CD8-positive, alpha-beta T cell (primary cell): ENCODE measurements at regions of chr2 and their contacts with region 1.

Region 1: GRCh38 chr2:106011380-106011779 is 182.7 kb downstream of the UXS1 start:
- DNase-seq: no peak
- ATAC-seq: no peak
- H3K4me3 ChIP-seq: no peak overlapping the region
- H3K4me3 Mint-ChIP-seq: no peak overlapping the region
- H3K27ac ChIP-seq: no peak overlapping the region
- H3K27ac Mint-ChIP-seq: no peak overlapping the region
- H3K4me1 ChIP-seq: no peaks in the 10 kb centered on the region
- H3K4me1 Mint-ChIP-seq: peaks cover 3% of the 10 kb centered on the region
- H3K27me3 ChIP-seq: no peaks in the 10 kb centered on the region
- H3K27me3 Mint-ChIP-seq: no peaks in the 10 kb centered on the region
- CTCF ChIP-seq: no peak

Region 2: DNA sequence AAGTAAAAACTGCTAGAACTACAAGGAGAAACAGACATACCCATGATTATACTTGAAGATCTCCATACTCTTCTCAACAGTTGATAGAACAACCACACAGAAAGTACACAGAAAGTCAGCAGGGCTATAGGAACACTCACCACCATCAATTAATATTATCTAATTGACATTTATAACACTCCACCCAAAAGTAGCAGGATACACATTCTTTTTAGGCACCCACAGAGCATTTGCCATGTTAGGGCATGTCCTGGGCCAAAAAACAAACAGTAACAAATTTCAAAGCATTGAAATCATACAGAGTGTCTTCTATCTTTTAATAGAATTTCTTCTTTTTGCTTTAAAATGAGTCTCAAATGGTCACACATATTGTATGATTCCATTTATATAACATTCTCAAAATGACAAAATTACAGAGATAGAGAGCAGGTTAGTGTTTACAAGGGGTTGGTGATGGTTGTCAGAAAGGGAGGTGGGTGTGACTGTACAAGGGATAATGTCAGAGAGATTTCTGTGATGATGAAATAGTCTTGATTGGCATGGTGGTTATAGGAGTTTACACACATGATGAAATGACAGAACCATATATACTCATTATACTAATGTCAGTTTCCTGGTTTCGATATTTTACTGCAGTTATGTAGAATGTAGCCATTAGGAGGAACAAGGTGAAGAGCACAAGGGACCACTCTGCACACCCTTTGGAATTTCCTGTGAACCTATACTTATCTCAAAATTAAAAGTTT is 183.9 kb before region 1 on chr2:
- CTCF ChIA-PET with region 1: no interaction called
- POLR2A ChIA-PET with region 1: no interaction called
- intact Hi-C with region 1: no loop called
- DNase-seq: no peak
- ATAC-seq: peak; percentile 39
- H3K4me3 ChIP-seq: no peak overlapping the region
- H3K4me3 Mint-ChIP-seq: no peak overlapping the region
- H3K27ac ChIP-seq: peak overlapping the region in 1 of 2 experiments; percentile 57
- H3K27ac Mint-ChIP-seq: peak overlapping the region; percentile 83
- H3K4me1 ChIP-seq: peaks cover 58% of the 10 kb centered on the region
- H3K4me1 Mint-ChIP-seq: peaks cover 90% of the 10 kb centered on the region
- H3K27me3 ChIP-seq: no peaks in the 10 kb centered on the region
- H3K27me3 Mint-ChIP-seq: no peaks in the 10 kb centered on the region
- CTCF ChIP-seq: no peak

Region 3: DNA sequence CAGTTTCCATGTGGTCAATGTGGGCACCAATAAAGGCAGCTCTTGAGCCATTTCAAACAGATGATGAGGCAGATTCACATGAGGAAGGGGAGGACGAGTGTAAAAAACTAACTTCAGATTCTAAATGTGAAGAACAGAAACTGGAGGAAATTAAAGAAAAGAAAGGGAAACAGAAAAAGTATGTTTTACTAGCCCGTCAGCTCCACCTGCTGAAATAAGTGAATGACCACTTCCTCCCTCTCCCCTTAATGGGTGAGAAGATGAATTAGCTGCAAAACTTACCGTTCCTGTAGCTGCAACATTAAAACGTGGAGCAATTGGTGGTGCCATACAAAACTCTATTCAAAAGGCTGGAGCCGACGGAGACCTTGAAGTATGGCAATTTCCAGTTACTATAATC is 20.8 kb before region 1 on chr2:
- CTCF ChIA-PET with region 1: no interaction called
- POLR2A ChIA-PET with region 1: no interaction called
- intact Hi-C with region 1: loop called in 1 of 2 experiments (anchors 1 kb)
- DNase-seq: peak in 1 of 9 experiments; percentile 26
- ATAC-seq: no peak
- H3K4me3 ChIP-seq: no peak overlapping the region
- H3K4me3 Mint-ChIP-seq: no peak overlapping the region
- H3K27ac ChIP-seq: no peak overlapping the region
- H3K27ac Mint-ChIP-seq: no peak overlapping the region
- H3K4me1 ChIP-seq: peaks cover 26% of the 10 kb centered on the region
- H3K4me1 Mint-ChIP-seq: peaks cover 11% of the 10 kb centered on the region
- H3K27me3 ChIP-seq: no peaks in the 10 kb centered on the region
- H3K27me3 Mint-ChIP-seq: no peaks in the 10 kb centered on the region
- CTCF ChIP-seq: no peak

Region 4: DNA sequence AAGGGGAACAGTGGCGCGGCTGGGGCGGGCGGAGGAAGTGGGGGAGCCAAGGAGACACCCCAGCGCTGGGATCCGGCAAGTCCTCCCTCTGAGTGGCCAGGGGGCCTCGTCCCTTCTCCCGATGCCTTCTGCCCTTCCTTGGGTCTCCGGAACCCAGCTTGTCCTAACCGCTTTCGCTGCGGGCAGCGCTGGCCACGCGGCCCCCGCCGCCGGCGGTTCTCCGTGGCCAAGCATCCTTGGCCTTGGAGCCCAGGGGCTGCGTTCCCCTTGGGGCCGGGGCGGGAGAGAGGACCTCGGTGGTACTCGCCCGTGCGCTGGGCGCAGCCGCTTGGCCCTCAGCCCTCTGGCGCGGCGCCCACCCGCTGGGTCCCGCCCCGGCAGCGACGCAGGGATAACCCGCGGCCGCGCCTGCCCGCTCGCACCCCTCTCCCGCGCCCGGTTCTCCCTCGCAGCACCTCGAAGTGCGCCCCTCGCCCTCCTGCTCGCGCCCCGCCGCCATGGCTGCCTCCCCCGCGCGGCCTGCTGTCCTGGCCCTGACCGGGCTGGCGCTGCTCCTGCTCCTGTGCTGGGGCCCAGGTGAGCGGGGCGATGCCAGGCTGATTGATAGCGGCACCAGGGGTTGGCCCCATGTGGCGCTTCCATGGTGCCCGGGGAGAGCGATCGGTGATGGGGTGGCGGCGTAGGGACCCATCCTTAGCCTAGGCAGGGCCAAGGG is 54.0 kb after region 1 on chr2:
- CTCF ChIA-PET with region 1: no interaction called
- POLR2A ChIA-PET with region 1: no interaction called
- intact Hi-C with region 1: loop called in 1 of 2 experiments (anchors 10 kb)
- DNase-seq: peak in 5 of 9 experiments; percentile 14 to 71 (median 37)
- ATAC-seq: peak; percentile 67
- H3K4me3 ChIP-seq: peak overlapping the region; percentile 41 to 63
- H3K4me3 Mint-ChIP-seq: peak overlapping the region; percentile 80
- H3K27ac ChIP-seq: no peak overlapping the region
- H3K27ac Mint-ChIP-seq: peak overlapping the region; percentile 69
- H3K4me1 ChIP-seq: peaks cover 16% of the 10 kb centered on the region
- H3K4me1 Mint-ChIP-seq: peaks cover 36% of the 10 kb centered on the region
- H3K27me3 ChIP-seq: no peaks in the 10 kb centered on the region
- H3K27me3 Mint-ChIP-seq: peaks cover 2% of the 10 kb centered on the region
- CTCF ChIP-seq: no peak

Region 5: GRCh38 chr2:106208874-106209273 is 197.5 kb after region 1 on chr2:
- CTCF ChIA-PET with region 1: no interaction called
- POLR2A ChIA-PET with region 1: no interaction called
- intact Hi-C with region 1: no loop called
- DNase-seq: no peak
- ATAC-seq: no peak
- H3K4me3 ChIP-seq: no peak overlapping the region
- H3K4me3 Mint-ChIP-seq: no peak overlapping the region
- H3K27ac ChIP-seq: no peak overlapping the region
- H3K27ac Mint-ChIP-seq: no peak overlapping the region
- H3K4me1 ChIP-seq: no peaks in the 10 kb centered on the region
- H3K4me1 Mint-ChIP-seq: peaks cover 15% of the 10 kb centered on the region
- H3K27me3 ChIP-seq: no peaks in the 10 kb centered on the region
- H3K27me3 Mint-ChIP-seq: no peaks in the 10 kb centered on the region
- CTCF ChIP-seq: no peak